Activated CD8-positive, alpha-beta memory T cell treated with anti-CD3 and anti-CD28 coated beads, Interleukin-2, amount 10 ng/mL, durations not matched to agents 7 days and 5 days (primary cell): ENCODE measurements at regions of chr16 and their contacts with region 1.

Region 1: DNA sequence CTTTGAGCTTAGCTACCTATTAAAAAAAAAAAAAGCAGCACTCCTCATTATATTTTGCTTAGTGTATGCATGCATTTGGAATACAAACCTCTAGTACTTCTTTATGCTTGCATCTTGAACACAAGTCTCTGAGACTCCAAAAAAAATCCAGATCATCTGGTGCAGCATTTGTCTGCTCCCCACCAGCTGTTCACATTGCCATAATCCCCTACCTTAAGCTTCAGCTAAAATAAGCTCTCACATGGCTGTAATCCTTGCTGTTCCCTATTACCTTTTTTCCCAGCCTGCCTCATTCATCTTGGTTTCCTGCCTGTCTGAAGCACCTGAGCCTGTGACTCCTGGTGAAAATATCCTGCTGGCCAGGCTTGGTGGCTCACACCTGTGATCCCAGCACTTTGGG is 7.5 kb upstream of the NFATC2IP start:
- DNase-seq: no peak
- ATAC-seq: no peak
- H3K4me3 Mint-ChIP-seq: no peak overlapping the region
- H3K27ac Mint-ChIP-seq: no peak overlapping the region
- H3K4me1 Mint-ChIP-seq: peaks cover 19% of the 10 kb centered on the region
- H3K27me3 Mint-ChIP-seq: no peaks in the 10 kb centered on the region

Region 2: DNA sequence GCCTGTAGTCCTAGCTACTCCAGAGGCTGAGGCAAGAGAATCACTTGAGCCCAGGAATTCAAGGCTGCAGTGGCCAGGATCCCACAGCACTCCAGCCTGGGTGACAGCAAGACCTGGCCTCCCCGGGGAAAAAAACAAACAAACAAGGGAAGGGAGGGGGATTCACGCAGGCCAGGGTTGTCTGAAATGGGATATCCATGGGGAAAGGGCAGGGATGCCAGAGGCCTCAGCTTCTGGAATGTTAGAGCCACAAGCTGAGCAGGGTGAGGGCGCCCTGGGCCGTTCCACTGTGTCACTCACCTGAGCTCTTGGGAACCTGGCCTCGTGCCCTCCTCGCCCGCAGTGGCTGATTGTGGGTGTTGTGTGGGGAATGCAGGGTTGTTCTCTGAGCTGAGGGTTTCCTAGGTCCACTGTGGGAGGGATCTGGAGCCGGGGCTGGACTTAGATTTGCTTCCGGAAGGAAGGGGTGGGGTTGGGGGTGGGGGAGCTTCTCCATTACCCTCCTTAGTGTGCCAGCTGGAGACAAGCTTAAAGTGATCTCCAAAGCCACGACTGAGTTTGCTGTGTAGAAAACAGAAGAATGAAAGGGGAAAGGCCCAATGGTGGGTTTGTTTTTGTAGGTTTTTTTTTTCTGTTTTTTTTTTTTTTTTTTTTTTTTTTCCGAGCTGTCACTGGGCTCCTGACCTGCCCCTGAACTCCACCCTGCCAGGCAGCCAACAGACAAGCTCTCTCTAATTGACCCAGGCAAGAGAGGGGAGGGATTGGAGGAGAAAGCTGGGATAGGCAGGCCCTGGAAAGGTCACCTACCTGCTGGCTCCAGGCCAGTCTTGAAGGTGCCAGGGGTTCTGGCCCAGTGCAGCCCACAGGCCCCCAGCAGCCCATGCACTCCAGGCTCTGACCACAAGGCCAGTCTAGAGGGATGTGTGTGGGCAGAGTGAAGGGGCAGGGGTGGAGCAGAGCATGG is 333.4 kb before region 1 on chr16 and contains the start of gene SULT1A1:
- CTCF ChIA-PET with region 1: no interaction called
- DNase-seq: no peak
- ATAC-seq: no peak
- H3K4me3 Mint-ChIP-seq: no peak within 1 kb of the TSS
- H3K27ac Mint-ChIP-seq: no peak within 1 kb of the TSS
- H3K4me1 Mint-ChIP-seq: peaks cover 9% of the 10 kb centered on the region
- H3K27me3 Mint-ChIP-seq: no peaks in the 10 kb centered on the region
- total RNA-seq, gene SULT1A1: 13.5 to 14.1 TPM

Region 3: GRCh38 chr16:28846080-28846932 is 97.0 kb before region 1 on chr16 and contains the start of gene TUFM:
- CTCF ChIA-PET with region 1: interaction called, 40 read pairs
- DNase-seq: peak; percentile 99
- ATAC-seq: peak; percentile 93
- H3K4me3 Mint-ChIP-seq: peak within 1 kb of the TSS; percentile 97
- H3K27ac Mint-ChIP-seq: peak within 1 kb of the TSS; percentile 96
- H3K4me1 Mint-ChIP-seq: peaks cover 31% of the 10 kb centered on the region
- H3K27me3 Mint-ChIP-seq: no peaks in the 10 kb centered on the region
- total RNA-seq, gene TUFM: 156 to 199 TPM

Region 4: GRCh38 chr16:28873536-28874201 is 69.6 kb before region 1 on chr16:
- CTCF ChIA-PET with region 1: interaction called, 43 read pairs
- DNase-seq: peak; percentile 71
- ATAC-seq: peak; percentile 86
- H3K4me3 Mint-ChIP-seq: no peak overlapping the region
- H3K27ac Mint-ChIP-seq: no peak overlapping the region
- H3K4me1 Mint-ChIP-seq: peaks cover 27% of the 10 kb centered on the region
- H3K27me3 Mint-ChIP-seq: no peaks in the 10 kb centered on the region

Region 5: GRCh38 chr16:28930652-28931051 is 12.6 kb before region 1 on chr16:
- CTCF ChIA-PET with region 1: interaction called, 22 read pairs
- DNase-seq: no peak
- ATAC-seq: no peak
- H3K4me3 Mint-ChIP-seq: no peak overlapping the region
- H3K27ac Mint-ChIP-seq: peak overlapping the region; percentile 4
- H3K4me1 Mint-ChIP-seq: peaks cover 16% of the 10 kb centered on the region
- H3K27me3 Mint-ChIP-seq: no peaks in the 10 kb centered on the region

Region 6: DNA sequence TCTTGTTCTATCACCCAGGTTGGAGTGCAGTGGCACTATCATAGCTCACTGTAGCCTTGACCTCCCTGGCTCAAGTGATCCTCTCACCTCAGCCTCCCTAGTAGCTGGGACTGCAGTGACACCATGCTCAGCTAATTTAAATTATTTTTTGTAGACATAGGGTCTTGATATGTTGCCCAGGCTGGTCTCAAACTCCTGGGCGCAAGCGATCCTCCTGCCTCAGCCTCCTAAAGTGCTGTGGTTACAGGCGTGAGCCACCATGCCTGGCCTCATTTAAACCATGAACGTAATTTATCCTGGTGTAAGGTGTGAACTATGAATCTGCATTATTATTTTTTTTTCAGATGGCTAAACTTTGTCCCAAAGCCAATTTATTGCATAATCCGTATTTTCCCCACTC is 78.9 kb after region 1 on chr16:
- CTCF ChIA-PET with region 1: no interaction called
- DNase-seq: no peak
- ATAC-seq: no peak
- H3K4me3 Mint-ChIP-seq: no peak overlapping the region
- H3K27ac Mint-ChIP-seq: no peak overlapping the region
- H3K4me1 Mint-ChIP-seq: peaks cover 43% of the 10 kb centered on the region
- H3K27me3 Mint-ChIP-seq: no peaks in the 10 kb centered on the region